ENCODE measurements at regions of chr17 and their contacts with region 1.

Region 1: DNA sequence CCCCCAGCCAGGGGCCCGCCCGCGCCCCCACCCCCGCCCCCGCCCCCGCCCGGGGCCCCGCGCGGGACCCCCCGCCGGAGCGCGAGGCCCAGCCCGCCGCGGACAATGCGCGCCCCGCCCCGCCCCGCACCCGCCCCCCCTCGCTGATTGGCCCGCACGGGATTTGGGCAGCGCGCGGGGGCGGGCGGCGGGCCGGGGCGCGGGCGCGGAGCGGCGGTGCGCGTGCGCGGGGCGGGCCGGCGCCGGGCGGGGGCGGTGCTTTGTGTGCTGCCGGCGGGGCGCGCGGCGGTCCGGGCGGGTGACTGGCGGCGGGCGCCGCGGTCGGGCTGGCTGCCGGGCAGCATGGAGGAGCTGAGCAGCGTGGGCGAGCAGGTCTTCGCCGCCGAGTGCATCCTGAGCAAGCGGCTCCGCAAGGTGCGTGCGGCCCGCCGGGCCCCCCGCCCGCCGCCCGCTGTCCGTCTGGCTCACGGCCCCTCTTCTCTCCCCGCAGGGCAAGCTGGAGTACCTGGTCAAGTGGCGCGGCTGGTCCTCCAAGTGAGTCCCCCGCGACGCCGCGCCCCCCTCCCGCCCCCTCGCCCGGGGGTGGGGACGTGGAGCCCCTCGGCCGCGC is at the start of gene CBX2:
- DNase-seq: peak; percentile 59 to 85 (median 76)
- H3K4me3 ChIP-seq: peak within 1 kb of the TSS; percentile 64 to 89 (median 77)
- H3K27ac ChIP-seq: peak within 1 kb of the TSS in 1 of 2 experiments; percentile 79
- H3K4me1 ChIP-seq: peaks cover 10 to 60% (median 57%) of the 10 kb centered on the region in 4 experiments
- H3K27me3 ChIP-seq: no peaks in the 10 kb centered on the region

Region 2: DNA sequence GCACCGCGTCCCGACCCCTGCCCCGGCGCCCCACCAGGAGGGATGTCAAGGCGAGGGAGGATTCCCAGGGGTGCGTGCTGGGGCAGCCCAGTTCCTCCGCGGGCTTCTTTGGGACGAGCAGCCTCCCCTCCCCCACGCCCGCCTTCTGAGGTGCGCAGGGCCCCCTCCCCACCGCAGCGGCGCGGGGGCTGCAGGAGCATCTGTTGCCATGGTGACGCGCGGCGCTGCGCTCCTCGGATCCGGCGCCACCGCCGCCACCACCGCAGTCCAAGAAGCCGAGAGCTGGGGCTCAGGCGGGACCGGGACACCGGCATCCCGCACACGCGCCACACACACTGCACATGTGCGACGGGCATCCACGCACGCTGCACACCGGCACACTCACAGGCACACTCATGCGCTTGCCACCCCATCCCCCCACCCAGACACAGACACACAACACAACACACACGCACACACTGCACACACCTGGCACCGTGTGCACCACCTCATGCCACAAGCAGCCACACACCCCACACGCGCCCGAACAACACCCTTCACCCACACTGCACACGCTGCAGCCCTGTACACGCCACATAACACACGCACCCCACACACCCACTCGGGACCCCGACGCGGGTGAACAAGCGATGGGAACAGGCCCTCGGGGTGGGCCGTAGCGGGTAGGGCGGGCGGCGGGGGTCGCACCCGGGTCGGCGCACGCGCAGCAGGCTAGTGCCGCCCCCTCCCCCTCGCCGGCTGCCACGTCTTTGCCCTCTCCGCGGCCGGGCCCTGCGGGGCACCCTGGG is 30.3 kb before region 1 on chr17:
- CTCF ChIA-PET with region 1: interaction called, 19 read pairs
- POLR2A ChIA-PET with region 1: no interaction called
- DNase-seq: peak in 2 of 3 donors; percentile 33 to 34
- H3K4me3 ChIP-seq: peak overlapping the region in 2 of 7 experiments; percentile 26 to 28
- H3K27ac ChIP-seq: no peak overlapping the region
- H3K4me1 ChIP-seq: peaks cover 0 to 29% (median 18%) of the 10 kb centered on the region in 4 experiments
- H3K27me3 ChIP-seq: peaks cover 0 to 62% (median 31%) of the 10 kb centered on the region in 5 experiments

Region 3: DNA sequence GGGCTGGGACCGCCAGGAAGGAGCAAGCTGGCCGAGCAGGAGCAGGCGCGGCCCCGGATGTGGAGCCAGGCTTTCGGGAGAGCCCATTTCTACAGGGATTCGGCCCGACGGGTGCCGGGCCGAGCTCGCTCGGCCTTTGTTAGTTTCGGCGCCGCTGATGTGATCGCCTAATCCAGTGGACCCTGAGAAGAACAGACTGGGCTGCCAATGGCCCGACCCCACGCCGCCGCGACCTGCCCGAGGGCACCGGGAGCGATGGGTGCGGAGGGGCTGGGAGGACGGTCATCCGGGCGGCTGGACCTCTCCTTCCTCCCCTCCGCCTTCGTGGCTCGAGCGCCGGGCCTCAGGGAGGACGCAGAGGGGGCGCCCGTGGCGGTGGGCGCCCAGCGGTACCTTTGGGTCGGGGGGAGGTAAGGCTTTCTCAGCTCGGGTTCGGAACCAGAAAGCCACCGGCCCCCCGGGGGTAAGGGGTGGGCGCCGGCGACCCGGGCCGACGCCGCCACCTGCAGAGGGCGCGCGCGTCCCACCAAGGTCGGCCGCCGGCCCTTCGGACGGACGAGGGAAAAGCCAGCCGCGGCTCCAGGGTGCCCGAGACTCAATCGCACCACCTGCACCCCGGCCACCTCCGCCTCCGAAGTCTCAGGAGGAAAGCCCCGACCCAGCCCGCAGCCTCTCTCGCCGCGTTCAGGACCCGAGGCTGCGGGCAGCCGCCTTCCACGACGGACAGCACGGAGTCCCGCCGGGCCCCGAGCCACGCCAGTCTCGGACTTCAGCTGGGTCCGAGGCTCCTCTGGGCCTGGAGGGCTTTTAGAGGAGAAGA is 11.7 kb after region 1 on chr17:
- CTCF ChIA-PET with region 1: interaction called, 20 read pairs
- POLR2A ChIA-PET with region 1: no interaction called
- DNase-seq: no peak
- H3K4me3 ChIP-seq: peak overlapping the region in 6 of 7 experiments; percentile 15 to 64 (median 58)
- H3K27ac ChIP-seq: no peak overlapping the region
- H3K4me1 ChIP-seq: peaks cover 0 to 39% (median 25%) of the 10 kb centered on the region in 4 experiments
- H3K27me3 ChIP-seq: peaks cover 0 to 58% (median 27%) of the 10 kb centered on the region in 5 experiments

Region 4: DNA sequence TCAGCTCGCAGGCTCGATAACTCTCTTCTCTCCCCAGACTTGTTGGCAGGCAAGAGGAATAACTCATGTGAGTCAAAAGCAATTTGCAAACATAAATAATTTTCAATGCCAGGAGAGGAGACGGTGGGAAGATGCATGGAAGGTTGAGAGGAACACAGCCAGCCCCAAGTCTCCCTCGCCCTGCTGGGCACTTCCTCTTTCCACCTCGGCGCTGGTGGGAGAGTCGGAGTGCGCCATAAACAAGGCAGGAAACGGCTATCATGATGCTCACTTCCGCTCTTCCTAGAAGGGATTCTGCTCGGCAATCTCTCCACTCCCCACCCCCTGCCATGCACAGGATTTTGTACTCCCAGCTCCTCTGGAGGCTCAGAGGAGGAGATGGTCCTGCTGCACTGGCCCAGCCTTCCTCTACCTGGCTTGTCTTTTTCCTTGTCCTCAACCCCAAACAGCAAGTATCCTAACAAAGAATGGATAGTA is 48.2 kb after region 1 on chr17:
- CTCF ChIA-PET with region 1: no interaction called
- POLR2A ChIA-PET with region 1: no interaction called
- DNase-seq: peak in 1 of 3 donors; percentile 57
- H3K4me3 ChIP-seq: peak overlapping the region in 3 of 7 experiments; percentile 6 to 20 (median 6)
- H3K27ac ChIP-seq: peak overlapping the region in 1 of 2 experiments; percentile 47
- H3K4me1 ChIP-seq: peaks cover 9 to 66% (median 39%) of the 10 kb centered on the region in 4 experiments
- H3K27me3 ChIP-seq: no peaks in the 10 kb centered on the region

Region 5: GRCh38 chr17:80187060-80187459 is 409.1 kb after region 1 on chr17:
- CTCF ChIA-PET with region 1: no interaction called
- POLR2A ChIA-PET with region 1: no interaction called
- DNase-seq: no peak
- H3K4me3 ChIP-seq: no peak overlapping the region
- H3K27ac ChIP-seq: no peak overlapping the region
- H3K4me1 ChIP-seq: peaks cover 0 to 7% (median 2%) of the 10 kb centered on the region in 4 experiments
- H3K27me3 ChIP-seq: peaks cover 0 to 3% (median 0%) of the 10 kb centered on the region in 5 experiments

Region 6: GRCh38 chr17:80237351-80237750 is 459.4 kb after region 1 on chr17:
- CTCF ChIA-PET with region 1: no interaction called
- POLR2A ChIA-PET with region 1: no interaction called
- DNase-seq: no peak
- H3K4me3 ChIP-seq: no peak overlapping the region
- H3K27ac ChIP-seq: no peak overlapping the region
- H3K4me1 ChIP-seq: no peaks in the 10 kb centered on the region
- H3K27me3 ChIP-seq: no peaks in the 10 kb centered on the region